Activated naive CD4-positive, alpha-beta T cell treated with anti-CD3 and anti-CD28 coated beads, Interleukin-2, amount 10 ng/mL, durations not matched to agents 7 days and 5 days (primary cell): ENCODE measurements at regions of chr11 and their contacts with region 1.

Region 1: GRCh38 chr11:67406969-67407687 is 3.2 kb downstream of the TBC1D10C start:
- DNase-seq: no peak
- H3K4me3 Mint-ChIP-seq: peak overlapping the region; percentile 96
- H3K27ac Mint-ChIP-seq: peak overlapping the region; percentile 94
- H3K4me1 Mint-ChIP-seq: peaks cover 84% of the 10 kb centered on the region
- H3K27me3 Mint-ChIP-seq: no peaks in the 10 kb centered on the region

Region 2: GRCh38 chr11:67439321-67439883 is 32.3 kb after region 1 on chr11:
- CTCF ChIA-PET with region 1: interaction called, 36 read pairs
- DNase-seq: peak; percentile 70
- H3K4me3 Mint-ChIP-seq: peak overlapping the region; percentile 100
- H3K27ac Mint-ChIP-seq: peak overlapping the region; percentile 97
- H3K4me1 Mint-ChIP-seq: peaks cover 62% of the 10 kb centered on the region
- H3K27me3 Mint-ChIP-seq: peaks cover 4% of the 10 kb centered on the region

Region 3: GRCh38 chr11:67626970-67627369 is 219.8 kb after region 1 on chr11:
- CTCF ChIA-PET with region 1: no interaction called
- DNase-seq: no peak
- H3K4me3 Mint-ChIP-seq: no peak overlapping the region
- H3K27ac Mint-ChIP-seq: no peak overlapping the region
- H3K4me1 Mint-ChIP-seq: peaks cover 23% of the 10 kb centered on the region
- H3K27me3 Mint-ChIP-seq: peaks cover 3% of the 10 kb centered on the region